MCF 10A (cell line): ENCODE measurements at regions of chr15 and their contacts with region 1.

Region 1: DNA sequence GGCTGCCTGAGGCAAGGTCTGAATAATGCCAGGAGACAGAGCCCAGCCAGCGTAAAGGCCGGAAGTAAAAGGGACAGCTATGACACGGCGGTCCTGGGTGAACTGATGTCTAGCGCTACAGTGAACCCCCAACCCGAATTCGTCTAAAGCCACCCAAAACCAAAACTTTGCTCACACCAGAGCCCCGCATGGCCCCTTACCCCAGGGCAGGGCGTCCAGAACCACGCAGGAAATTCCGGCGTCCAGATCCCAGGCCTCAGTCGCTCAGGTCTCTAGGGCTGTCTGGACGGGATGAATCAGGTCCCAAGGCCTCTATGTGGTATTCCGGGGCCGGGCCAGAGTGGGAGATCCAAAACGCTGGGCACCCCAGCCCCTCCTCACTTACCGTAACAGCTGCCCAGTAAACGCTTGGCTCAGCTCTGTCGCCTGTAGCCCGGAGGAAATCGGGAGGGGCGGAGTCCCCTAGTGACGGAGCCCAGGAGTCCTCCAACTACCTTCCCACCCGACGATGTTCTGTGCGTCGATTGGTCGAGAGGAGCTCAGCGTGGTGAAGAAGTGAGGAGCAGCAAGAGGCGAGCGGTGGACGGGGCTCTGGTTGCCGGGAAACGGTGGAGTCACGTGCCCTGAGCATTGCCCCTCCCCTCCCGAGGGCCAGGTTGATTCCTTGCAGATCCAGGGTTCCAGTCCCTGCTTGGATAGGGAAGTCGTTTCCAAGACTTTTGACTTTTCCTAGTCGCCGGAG is at the start of gene CCDC32:
- DNase-seq: peak; percentile 99
- H3K4me3 Mint-ChIP-seq: peak within 1 kb of the TSS; percentile 92
- H3K27ac Mint-ChIP-seq: peak within 1 kb of the TSS; percentile 96
- H3K4me1 Mint-ChIP-seq: peaks cover 14% of the 10 kb centered on the region
- H3K27me3 Mint-ChIP-seq: no peaks in the 10 kb centered on the region
- CTCF ChIP-seq: no peak
- total RNA-seq, gene CCDC32: 17.9 and 18.1 TPM in 2 replicates

Region 2: GRCh38 chr15:40440743-40441564 is 123.8 kb before region 1 on chr15 and contains the start of gene BAHD1:
- CTCF ChIA-PET with region 1: interaction called, 3 read pairs
- POLR2A ChIA-PET with region 1: interaction called, 16 read pairs
- intact Hi-C with region 1: loop called (anchors 10 kb)
- DNase-seq: peak; percentile 91
- H3K4me3 Mint-ChIP-seq: peak within 1 kb of the TSS; percentile 89
- H3K27ac Mint-ChIP-seq: peak within 1 kb of the TSS; percentile 70
- H3K4me1 Mint-ChIP-seq: peaks cover 38% of the 10 kb centered on the region
- H3K27me3 Mint-ChIP-seq: peaks cover 7% of the 10 kb centered on the region
- CTCF ChIP-seq: no peak
- total RNA-seq, gene BAHD1: 14.9 and 15.1 TPM in 2 replicates

Region 3: DNA sequence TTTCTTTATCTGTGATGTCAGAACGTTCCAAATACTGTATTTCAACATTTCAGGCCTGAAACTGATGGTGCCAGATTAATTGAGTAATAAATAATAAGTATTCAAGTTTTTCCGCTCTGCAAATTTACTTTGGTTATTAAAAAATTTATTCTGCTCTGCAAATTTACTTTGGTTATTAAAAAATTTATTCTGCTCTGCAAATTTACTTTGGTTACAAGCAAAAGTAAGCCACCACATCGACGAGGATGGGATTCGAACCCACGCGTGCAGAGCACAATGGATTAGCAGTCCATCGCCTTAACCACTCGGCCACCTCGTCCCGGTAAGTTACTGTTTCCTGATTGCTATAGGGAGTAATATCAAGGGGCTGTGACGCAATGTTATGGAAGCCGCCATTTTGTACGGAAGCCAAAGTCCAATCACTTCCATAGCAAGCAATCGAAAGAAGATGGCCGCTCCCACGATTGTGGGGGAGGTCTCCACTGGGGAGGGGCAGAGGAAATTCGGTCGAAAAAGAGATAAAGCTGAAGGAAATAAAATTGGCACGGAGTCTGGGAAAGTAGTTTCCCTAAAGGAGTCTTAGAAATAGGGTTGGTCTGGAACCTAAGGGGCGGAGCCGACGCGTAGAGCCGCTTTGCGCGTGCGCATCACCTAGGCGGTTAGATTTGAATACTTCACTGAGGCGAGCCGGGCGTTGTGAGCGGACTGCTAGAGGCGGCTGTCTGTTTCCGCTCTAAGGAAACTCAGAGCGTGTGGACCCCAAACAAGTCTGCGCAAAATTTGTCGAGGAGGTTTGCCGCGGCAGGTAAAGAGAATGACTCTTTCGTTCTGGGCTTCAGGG is 29.0 kb after region 1 on chr15 and contains the start of gene KNL1:
- CTCF ChIA-PET with region 1: interaction called, 20 read pairs
- POLR2A ChIA-PET with region 1: interaction called, 20 read pairs
- intact Hi-C with region 1: loop called (anchors 2 kb)
- DNase-seq: peak; percentile 95
- H3K4me3 Mint-ChIP-seq: peak within 1 kb of the TSS; percentile 89
- H3K27ac Mint-ChIP-seq: peak within 1 kb of the TSS; percentile 100
- H3K4me1 Mint-ChIP-seq: peaks cover 11% of the 10 kb centered on the region
- H3K27me3 Mint-ChIP-seq: no peaks in the 10 kb centered on the region
- CTCF ChIP-seq: no peak
- total RNA-seq, gene KNL1: 7.9 and 11.4 TPM in 2 replicates